ENCODE measurements at regions of chr1 and their contacts with region 1.

Region 1: DNA sequence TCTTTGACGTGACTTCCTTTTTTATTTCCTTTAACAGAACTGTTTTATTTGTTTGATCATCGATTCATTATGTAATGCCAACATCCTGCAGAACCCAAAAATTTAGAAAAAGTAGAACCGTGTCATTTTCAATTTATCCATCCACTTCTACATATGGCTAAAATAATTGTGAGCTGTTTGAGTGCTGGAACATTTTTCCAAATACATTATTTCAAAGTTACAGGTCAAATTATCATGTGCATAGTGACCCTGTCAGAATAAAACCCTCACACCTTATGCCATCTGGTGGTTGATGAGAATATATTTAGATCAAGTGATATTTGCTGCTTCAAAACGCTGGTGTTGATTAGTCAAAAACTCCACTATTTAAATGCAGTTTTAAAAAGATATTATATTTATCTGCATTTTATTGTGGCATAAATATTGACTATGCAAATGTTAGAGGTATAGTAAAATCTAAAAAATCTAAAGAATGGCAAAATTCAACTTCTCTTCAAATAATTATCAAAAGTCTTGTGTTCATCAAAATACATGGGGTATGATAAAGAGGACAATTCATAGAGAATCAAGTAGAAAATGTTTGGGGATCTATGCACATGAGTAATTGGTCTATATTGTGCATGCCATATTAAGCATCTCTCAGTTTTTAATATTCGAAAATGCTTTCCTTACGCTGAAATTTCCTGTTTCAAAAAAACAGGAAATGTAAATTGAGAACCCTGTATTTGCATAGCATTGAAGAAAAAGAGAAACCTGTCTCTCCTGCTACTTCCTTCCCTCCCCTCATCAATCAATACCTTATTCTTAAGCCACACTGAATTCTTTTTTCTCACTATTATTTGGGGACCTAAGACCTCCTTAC is 39.7 kb downstream of the UBE2U start:
- DNase-seq: no peak
- ATAC-seq: peak; percentile 57

Region 2: DNA sequence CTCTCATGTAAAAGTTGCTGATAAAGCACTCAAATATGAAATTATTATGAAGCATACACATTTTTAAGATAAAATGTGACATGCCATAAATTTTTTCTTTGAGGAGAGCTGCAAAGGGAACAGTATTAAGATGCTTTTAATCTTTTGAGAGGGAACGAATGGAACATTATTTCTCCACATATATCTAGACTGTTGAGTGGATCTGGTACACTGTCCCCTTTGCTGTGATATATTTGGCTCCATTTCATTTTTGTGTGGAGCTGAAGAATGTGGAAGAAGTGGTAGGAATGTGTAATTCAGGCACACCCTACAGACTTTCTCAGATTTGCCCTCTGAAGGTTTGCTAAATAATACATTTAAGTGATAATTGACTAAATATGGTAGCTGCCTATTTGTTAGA is 618.2 kb before region 1 on chr1:
- intact Hi-C with region 1: loop called (anchors 5 kb)
- DNase-seq: no peak
- ATAC-seq: peak; percentile 22

Region 3: DNA sequence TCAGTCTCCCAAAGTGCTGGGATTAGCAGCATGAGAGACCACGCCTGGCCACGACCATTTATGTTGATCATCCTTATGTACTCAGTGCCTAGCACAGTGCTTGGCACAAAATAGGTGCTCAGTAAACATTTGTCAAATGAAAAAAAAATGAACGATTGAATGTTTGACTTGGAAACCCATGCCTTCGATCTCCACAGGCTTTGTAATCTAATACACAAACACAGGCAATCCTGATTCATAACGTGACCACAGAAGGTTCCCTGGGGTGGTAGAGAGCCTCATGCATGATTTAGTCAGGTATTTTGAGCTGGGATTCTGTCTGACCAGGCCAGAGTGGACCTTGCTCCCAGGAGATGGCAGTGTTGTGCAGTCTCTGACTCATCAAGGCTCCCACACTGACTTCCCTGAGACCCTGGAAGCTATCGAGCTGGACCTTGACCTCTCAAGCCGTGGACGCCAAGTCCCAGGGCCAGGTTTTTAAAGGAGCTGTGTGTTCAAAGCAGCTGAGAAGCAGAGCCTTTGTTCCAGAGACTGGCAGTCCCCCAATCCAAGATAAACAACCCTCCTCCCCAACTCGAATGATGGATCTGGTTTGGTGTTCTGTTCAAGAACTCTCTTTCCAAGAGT is 568.8 kb before region 1 on chr1:
- intact Hi-C with region 1: loop called (anchors 5 kb)
- DNase-seq: peak; percentile 79
- ATAC-seq: peak; percentile 94